ENCODE measurements at regions of chr2 and their contacts with region 1.

Region 1: GRCh38 chr2:152335010-152335725 is at the start of gene FMNL2:
- DNase-seq: peak in 6 of 9 donors; percentile 2 to 74 (median 24)
- ATAC-seq: peak; percentile 77
- H3K4me3 ChIP-seq: peak within 1 kb of the TSS; percentile 24
- H3K4me3 Mint-ChIP-seq: peak within 1 kb of the TSS; percentile 72 to 93 (median 86)
- H3K27ac ChIP-seq: no peak within 1 kb of the TSS
- H3K27ac Mint-ChIP-seq: no peak within 1 kb of the TSS
- H3K4me1 ChIP-seq: no peaks in the 10 kb centered on the region
- H3K4me1 Mint-ChIP-seq: peaks cover 5 to 20% (median 14%) of the 10 kb centered on the region in 7 donors
- H3K27me3 ChIP-seq: peaks cover 0 to 8% of the 10 kb centered on the region in 2 donors
- H3K27me3 Mint-ChIP-seq: peaks cover 55 to 70% (median 59%) of the 10 kb centered on the region in 5 donors
- total RNA-seq, gene FMNL2: 0.66 to 2.7 (median 1.7) TPM

Region 2: DNA sequence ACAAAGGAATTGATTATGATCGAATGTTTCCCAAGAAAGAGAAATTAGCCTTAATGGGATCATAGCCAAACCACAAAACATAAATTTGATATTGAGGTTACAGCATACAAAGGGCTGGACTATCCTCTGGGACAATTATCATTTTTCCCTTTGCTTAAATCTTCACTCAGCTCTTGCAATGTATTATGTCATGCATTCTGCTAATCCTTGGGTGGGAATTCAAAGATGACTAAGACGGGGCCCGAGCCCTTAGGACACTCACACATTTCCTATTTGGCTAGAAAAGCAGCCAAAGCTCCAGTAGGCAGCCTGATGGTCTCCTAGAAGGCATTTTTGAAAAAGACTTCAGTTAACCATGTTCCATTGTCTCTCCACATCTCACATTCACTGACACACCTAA is 1028.5 kb before region 1 on chr2:
- CTCF ChIA-PET with region 1: no interaction called
- POLR2A ChIA-PET with region 1: no interaction called
- intact Hi-C with region 1: no loop called
- DNase-seq: no peak
- ATAC-seq: no peak
- H3K4me3 ChIP-seq: no peak overlapping the region
- H3K4me3 Mint-ChIP-seq: no peak overlapping the region
- H3K27ac ChIP-seq: no peak overlapping the region
- H3K27ac Mint-ChIP-seq: no peak overlapping the region
- H3K4me1 ChIP-seq: no peaks in the 10 kb centered on the region
- H3K4me1 Mint-ChIP-seq: no peaks in the 10 kb centered on the region
- H3K27me3 ChIP-seq: no peaks in the 10 kb centered on the region
- H3K27me3 Mint-ChIP-seq: peaks cover 0 to 18% (median 3%) of the 10 kb centered on the region in 5 donors

Region 3: DNA sequence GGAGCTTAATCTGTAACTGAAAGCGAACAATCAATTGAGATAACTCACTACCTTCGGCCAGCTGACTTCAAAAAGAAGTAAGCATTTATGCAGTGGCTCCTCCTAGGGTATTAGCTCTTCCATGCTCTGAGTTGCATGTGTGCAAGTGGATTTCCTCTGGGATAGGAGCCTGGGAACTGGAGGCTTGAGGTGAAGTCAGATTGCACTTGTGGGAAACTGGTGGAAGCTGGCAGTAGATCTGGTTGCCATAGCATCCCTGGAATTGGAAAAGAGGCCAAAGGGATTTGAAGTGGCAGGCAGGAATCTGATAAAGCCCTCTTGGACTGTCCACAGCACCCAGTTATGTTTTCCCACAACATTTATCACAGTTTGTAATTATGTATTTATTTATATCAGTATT is 50.8 kb before region 1 on chr2:
- CTCF ChIA-PET with region 1: no interaction called
- POLR2A ChIA-PET with region 1: no interaction called
- intact Hi-C with region 1: no loop called
- DNase-seq: no peak
- ATAC-seq: no peak
- H3K4me3 ChIP-seq: no peak overlapping the region
- H3K4me3 Mint-ChIP-seq: no peak overlapping the region
- H3K27ac ChIP-seq: no peak overlapping the region
- H3K27ac Mint-ChIP-seq: no peak overlapping the region
- H3K4me1 ChIP-seq: no peaks in the 10 kb centered on the region
- H3K4me1 Mint-ChIP-seq: no peaks in the 10 kb centered on the region
- H3K27me3 ChIP-seq: no peaks in the 10 kb centered on the region
- H3K27me3 Mint-ChIP-seq: peaks cover 3 to 13% (median 12%) of the 10 kb centered on the region in 5 donors

Region 4: GRCh38 chr2:152407204-152407721 is 72.1 kb after region 1 on chr2:
- CTCF ChIA-PET with region 1: no interaction called
- POLR2A ChIA-PET with region 1: no interaction called
- intact Hi-C with region 1: loop called in 1 of 2 experiments (anchors 2 kb)
- DNase-seq: peak in 1 of 9 donors; percentile 47
- ATAC-seq: peak; percentile 57
- H3K4me3 ChIP-seq: no peak overlapping the region
- H3K4me3 Mint-ChIP-seq: peak overlapping the region in 7 of 10 donors; percentile 28 to 78 (median 44)
- H3K27ac ChIP-seq: no peak overlapping the region
- H3K27ac Mint-ChIP-seq: peak overlapping the region in 1 of 9 donors; percentile 63
- H3K4me1 ChIP-seq: no peaks in the 10 kb centered on the region
- H3K4me1 Mint-ChIP-seq: peaks cover 2 to 38% (median 6%) of the 10 kb centered on the region in 7 donors
- H3K27me3 ChIP-seq: no peaks in the 10 kb centered on the region
- H3K27me3 Mint-ChIP-seq: peaks cover 0 to 46% (median 22%) of the 10 kb centered on the region in 5 donors

Region 5: GRCh38 chr2:152635635-152636298 is 300.6 kb after region 1 on chr2:
- CTCF ChIA-PET with region 1: no interaction called
- POLR2A ChIA-PET with region 1: no interaction called
- intact Hi-C with region 1: loop called in 1 of 2 experiments (anchors 2 kb)
- DNase-seq: peak; percentile 14 to 71 (median 49)
- ATAC-seq: peak; percentile 67
- H3K4me3 ChIP-seq: no peak overlapping the region
- H3K4me3 Mint-ChIP-seq: no peak overlapping the region
- H3K27ac ChIP-seq: no peak overlapping the region
- H3K27ac Mint-ChIP-seq: no peak overlapping the region
- H3K4me1 ChIP-seq: no peaks in the 10 kb centered on the region
- H3K4me1 Mint-ChIP-seq: no peaks in the 10 kb centered on the region
- H3K27me3 ChIP-seq: no peaks in the 10 kb centered on the region
- H3K27me3 Mint-ChIP-seq: peaks cover 0 to 4% (median 0%) of the 10 kb centered on the region in 5 donors

Measured in naive thymus-derived CD4-positive, alpha-beta T cell (primary cell).